Esophagus squamous epithelium (tissue), 5 donors: ENCODE measurements at regions of chr14 and their contacts with region 1.

Region 1: GRCh38 chr14:60188115-60188514 is 22.9 kb upstream of the DHRS7 start:
- DNase-seq: no peak
- H3K4me3 ChIP-seq: no peak overlapping the region
- H3K27ac ChIP-seq: no peak overlapping the region
- H3K4me1 ChIP-seq: peaks cover 0 to 9% (median 8%) of the 10 kb centered on the region in 3 donors
- H3K27me3 ChIP-seq: no peaks in the 10 kb centered on the region
- CTCF ChIP-seq: no peak
- POLR2A ChIP-seq: no peak

Region 2: GRCh38 chr14:59964251-59965007 is 223.7 kb before region 1 on chr14:
- intact Hi-C with region 1: loop called (anchors 5 kb)
- DNase-seq: no peak
- H3K4me3 ChIP-seq: no peak overlapping the region
- H3K27ac ChIP-seq: no peak overlapping the region
- H3K4me1 ChIP-seq: peaks cover 0 to 8% (median 0%) of the 10 kb centered on the region in 3 donors
- H3K27me3 ChIP-seq: no peaks in the 10 kb centered on the region
- CTCF ChIP-seq: no peak
- POLR2A ChIP-seq: no peak

Region 3: DNA sequence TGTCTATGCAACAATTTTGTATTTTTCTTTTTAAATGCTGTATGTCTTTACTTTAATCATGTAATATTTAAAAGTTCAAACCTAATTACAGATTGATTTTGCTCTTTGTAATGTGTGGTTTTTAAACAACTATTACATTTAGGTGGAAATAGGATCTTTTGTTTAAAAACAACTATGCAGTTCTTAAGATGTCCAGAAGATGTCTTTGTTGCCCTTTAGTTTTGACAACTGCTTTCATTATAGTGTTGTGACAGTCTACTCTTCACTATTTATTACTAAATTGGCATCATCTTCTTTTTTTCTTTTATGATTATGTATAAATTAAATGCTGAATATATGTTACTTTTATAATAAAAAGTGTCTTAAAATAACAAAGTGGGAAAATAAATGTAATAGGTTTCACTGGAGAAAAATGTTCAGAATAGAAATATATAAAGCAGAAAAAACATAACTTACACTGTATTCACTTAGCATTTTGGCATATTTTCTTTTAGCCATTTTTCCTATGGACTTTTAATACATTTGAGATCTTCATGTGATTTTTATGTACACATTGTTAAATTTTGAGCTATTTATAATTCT is 123.5 kb before region 1 on chr14:
- intact Hi-C with region 1: loop called (anchors 5 kb)
- DNase-seq: no peak
- H3K4me3 ChIP-seq: no peak overlapping the region
- H3K27ac ChIP-seq: no peak overlapping the region
- H3K4me1 ChIP-seq: no peaks in the 10 kb centered on the region
- H3K27me3 ChIP-seq: no peaks in the 10 kb centered on the region
- CTCF ChIP-seq: peak in 5 of 6 experiments; percentile 29 to 63 (median 54)
- POLR2A ChIP-seq: no peak

Region 4: DNA sequence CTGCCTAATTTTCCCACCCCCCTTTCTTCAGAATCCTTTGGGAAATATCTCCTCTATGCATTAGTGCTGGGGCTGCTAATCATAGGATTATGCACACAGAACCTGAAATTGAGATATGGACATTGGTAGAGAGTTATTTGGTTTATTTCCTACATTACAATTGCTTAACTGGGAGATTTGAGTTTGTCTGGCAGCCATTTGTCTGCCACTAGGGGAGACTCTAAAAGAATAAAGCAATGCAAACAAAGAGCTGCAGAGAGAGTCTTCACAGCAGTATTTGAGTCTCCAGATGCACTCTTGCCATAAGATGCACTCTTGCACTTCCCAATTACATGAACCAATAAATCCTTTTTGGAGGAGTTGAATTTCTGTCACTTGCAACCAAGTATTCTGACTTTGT is 108.4 kb before region 1 on chr14:
- intact Hi-C with region 1: no loop called
- DNase-seq: no peak
- H3K4me3 ChIP-seq: no peak overlapping the region
- H3K27ac ChIP-seq: no peak overlapping the region
- H3K4me1 ChIP-seq: no peaks in the 10 kb centered on the region
- H3K27me3 ChIP-seq: no peaks in the 10 kb centered on the region
- CTCF ChIP-seq: peak in 1 of 6 experiments; percentile 4
- POLR2A ChIP-seq: no peak

Region 5: DNA sequence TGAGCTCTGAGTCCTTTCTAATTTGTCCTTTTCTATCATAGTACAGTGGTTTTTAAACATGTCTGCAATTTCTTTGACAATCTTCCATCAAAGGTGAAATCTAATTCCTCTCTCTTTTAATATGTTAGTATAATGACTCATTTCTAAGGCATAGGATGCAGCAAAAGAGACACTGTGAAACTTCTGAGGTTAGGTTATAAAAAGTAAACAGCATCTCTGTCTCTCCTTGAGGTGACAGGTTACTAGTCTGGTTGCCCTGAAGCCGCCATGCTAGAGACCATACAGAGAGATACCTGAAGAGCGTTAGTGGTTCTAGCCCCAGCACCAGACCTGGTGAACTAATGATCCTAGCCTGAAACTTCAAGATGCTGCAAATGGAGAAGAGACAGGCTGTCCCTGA is 175.2 kb after region 1 on chr14:
- intact Hi-C with region 1: no loop called
- DNase-seq: no peak
- H3K4me3 ChIP-seq: no peak overlapping the region
- H3K27ac ChIP-seq: no peak overlapping the region
- H3K4me1 ChIP-seq: no peaks in the 10 kb centered on the region
- H3K27me3 ChIP-seq: no peaks in the 10 kb centered on the region
- CTCF ChIP-seq: no peak
- POLR2A ChIP-seq: no peak